ENCODE measurements at regions of chr1 and their contacts with region 1.

Region 1: DNA sequence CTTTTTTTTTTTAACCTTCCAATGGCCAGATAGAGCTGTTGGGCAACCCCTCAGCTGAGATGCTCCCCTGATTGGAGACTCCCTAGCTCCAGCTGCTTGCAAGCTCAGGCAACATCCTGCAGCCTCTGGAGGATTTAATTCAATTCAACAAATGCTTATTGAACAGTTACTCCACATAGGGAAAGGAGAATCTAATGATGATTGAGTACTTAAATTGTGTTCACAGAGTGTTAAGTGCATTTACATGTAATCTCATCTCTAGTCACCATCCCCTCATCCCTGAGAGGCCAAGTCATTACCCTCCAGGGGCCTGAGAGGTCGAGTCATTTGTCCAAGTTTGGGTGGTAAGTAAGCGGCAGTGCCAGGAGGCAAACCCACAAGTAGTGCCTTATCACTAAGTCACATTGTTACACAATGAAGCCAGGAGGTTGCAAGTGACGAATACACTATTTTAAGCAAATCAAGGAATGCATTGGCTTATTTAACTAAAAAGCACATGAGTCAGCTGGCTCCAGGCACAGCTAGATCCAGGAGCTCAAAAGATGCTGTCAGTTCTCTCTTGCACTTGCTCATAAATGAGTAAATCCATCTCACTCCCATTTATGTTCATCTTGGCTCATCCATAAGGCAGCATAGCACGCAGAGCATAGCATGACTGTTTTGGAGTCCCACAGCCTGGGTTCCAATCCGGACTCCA is 64.3 kb downstream of the OPTC start:
- DNase-seq: no peak

Region 2: DNA sequence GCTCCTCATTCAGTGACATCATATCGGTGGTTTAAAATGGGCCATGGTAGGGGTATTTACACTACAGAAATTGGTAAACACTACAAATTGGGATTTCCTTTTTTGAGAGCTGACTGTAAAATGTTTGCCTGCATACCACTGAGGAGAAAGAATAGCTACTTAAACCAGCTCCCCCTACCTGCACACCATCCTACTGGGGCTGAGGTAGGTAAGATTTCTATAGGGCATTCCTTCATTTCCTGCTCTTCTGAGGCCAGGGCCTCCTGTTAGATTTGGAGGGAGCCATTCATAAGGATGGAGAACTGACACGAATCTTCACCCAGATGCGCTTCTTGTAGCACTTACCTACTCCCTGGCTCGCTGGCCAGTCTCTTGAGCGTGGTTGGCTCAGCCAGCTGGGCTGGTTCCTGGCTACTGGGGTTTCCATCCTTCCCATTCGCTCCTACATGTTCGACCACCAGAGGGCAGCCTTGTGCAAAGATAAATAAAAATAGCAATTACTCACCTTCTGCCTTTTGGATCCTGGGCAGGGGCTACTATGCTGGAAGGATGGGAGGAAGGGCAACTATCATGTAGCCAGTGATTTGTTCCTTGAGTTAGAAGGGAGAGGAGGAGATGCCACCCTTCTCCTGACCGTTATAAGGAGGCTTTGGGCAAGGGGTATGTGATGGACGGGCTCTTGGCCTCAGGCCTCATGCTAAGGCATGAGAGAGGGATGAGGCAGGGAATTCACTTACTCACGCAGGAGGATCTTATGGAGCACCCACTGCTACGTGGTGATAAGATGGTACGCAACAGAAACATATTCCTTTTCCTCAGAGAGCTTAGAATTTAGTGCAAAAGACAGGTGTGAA is 53.6 kb before region 1 on chr1:
- intact Hi-C with region 1: loop called (anchors 1 kb)
- DNase-seq: peak; percentile 83

Region 3: DNA sequence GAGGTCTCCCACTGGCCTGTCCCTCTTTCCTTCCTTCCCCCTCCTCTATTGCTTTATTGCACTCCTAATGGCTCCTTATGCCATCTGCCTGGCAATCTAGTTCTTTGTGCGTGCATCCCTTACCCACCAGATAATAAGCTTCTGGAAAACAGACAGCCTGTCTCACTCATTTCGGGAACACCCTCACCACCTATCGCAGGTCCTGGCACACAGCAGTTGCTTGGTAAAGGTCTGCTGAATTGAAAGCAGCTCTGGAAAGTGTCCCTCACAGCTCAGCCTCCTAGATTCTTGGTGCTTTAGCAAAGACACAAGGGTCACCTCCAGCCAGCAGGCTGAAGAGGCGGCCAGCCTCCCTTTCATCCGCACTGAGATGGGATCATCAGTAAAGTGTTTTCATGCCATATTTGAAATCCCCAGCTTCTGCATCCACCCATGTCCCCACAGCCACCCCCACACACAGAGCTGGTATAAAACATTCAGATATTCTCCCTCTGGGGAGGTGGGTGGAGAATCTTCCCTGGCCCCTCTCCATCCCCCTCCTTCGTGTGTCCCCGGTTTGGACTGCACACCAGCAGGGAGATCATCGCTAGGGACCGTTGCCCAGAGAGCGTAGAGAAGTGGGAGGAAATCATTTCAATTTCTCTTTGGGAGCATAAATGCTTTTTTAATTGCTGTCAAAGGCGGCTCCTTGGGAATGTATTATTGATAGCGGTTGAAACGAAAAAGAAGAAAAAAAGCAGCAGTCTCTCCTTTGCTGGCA is 39.3 kb after region 1 on chr1:
- intact Hi-C with region 1: loop called (anchors 1 kb)
- DNase-seq: no peak